Activated CD8-positive, alpha-beta memory T cell treated with anti-CD3 and anti-CD28 coated beads, Interleukin-2, amount 10 ng/mL, durations not matched to agents 7 days and 5 days (primary cell): ENCODE measurements at regions of chr12 and their contacts with region 1.

Region 1: GRCh38 chr12:47085815-47086252 is 6.1 kb upstream of the AMIGO2 start:
- DNase-seq: peak; percentile 79
- ATAC-seq: peak; percentile 96
- H3K4me3 Mint-ChIP-seq: peak overlapping the region; percentile 61
- H3K27ac Mint-ChIP-seq: peak overlapping the region; percentile 84
- H3K4me1 Mint-ChIP-seq: peaks cover 54% of the 10 kb centered on the region
- H3K27me3 Mint-ChIP-seq: no peaks in the 10 kb centered on the region

Region 2: GRCh38 chr12:47194501-47194900 is 108.7 kb after region 1 on chr12:
- CTCF ChIA-PET with region 1: interaction called, 10 read pairs
- DNase-seq: no peak
- ATAC-seq: no peak
- H3K4me3 Mint-ChIP-seq: no peak overlapping the region
- H3K27ac Mint-ChIP-seq: peak overlapping the region; percentile 88
- H3K4me1 Mint-ChIP-seq: peaks cover 56% of the 10 kb centered on the region
- H3K27me3 Mint-ChIP-seq: no peaks in the 10 kb centered on the region